ENCODE measurements at regions of chr2 and their contacts with region 1.

Region 1: GRCh38 chr2:99489761-99490622 is at the start of gene REV1:
- DNase-seq: peak; percentile 92 to 96 (median 95)
- H3K4me3 ChIP-seq: peak within 1 kb of the TSS; percentile 93
- H3K27ac ChIP-seq: peak within 1 kb of the TSS; percentile 98 to 99
- H3K4me1 ChIP-seq: no peaks in the 10 kb centered on the region
- H3K27me3 ChIP-seq: no peaks in the 10 kb centered on the region
- CTCF ChIP-seq: peak; percentile 69 to 98 (median 96)
- EP300 ChIP-seq: no peak
- POLR2A ChIP-seq: peak; percentile 55
- total RNA-seq, gene REV1: 43.2 to 63.3 (median 53.1) TPM

Region 2: DNA sequence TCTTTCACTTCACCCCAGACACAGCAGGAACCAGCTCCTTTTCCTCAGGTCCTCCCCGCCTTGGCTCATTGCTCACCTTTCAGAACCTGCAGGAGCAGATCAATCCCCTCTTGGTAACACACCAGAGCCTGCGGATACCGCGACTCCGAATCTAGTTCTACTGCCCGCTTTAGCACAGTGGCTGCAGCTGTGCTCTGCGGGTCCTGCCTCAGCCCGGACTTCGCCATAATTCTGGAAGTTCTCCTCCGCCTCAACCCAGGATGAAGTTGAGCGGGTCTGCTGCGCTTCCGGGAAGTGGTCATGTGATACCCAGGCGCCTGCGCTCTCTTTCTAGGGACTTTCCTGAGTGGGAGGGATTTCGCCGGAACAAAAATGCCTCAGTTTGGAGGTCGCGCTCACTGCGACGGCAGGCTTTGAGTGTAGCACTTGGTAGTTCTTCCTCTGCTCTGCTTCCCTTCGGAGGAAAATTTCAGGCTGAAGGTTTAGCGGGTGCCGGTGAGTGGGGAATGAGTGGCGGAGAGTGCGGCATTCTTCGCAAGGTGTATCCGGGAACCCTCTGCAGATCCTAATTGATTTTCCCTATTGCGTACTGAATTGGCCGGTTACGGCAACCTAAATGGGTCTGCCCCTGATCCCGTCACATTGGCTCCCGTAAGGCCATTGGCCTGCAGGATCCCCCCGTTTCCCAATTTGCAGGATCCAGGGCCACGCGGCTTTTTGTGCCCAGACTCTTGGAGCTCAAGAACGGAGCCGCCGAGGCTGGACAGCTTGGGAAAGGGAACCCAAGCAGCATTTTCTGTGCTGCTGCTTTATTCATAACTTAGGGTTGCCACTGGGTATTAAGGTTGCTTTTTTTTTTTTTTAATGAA is 309.0 kb before region 1 on chr2 and contains the starts of genes MITD1 and MRPL30:
- intact Hi-C with region 1: loop called in 1 of 4 experiments (anchors 10 kb)
- DNase-seq: peak; percentile 87 to 92 (median 91)
- H3K4me3 ChIP-seq: peak within 1 kb of the TSS; percentile 78
- H3K27ac ChIP-seq: no peak within 1 kb of the TSS
- H3K4me1 ChIP-seq: peaks cover 10% of the 10 kb centered on the region
- H3K27me3 ChIP-seq: no peaks in the 10 kb centered on the region
- CTCF ChIP-seq: no peak
- EP300 ChIP-seq: no peak
- POLR2A ChIP-seq: peak; percentile 24
- total RNA-seq, gene MITD1: 16.0 to 26.1 (median 20.1) TPM
- total RNA-seq, gene MRPL30: 18.7 to 29.0 (median 21.8) TPM

Region 3: DNA sequence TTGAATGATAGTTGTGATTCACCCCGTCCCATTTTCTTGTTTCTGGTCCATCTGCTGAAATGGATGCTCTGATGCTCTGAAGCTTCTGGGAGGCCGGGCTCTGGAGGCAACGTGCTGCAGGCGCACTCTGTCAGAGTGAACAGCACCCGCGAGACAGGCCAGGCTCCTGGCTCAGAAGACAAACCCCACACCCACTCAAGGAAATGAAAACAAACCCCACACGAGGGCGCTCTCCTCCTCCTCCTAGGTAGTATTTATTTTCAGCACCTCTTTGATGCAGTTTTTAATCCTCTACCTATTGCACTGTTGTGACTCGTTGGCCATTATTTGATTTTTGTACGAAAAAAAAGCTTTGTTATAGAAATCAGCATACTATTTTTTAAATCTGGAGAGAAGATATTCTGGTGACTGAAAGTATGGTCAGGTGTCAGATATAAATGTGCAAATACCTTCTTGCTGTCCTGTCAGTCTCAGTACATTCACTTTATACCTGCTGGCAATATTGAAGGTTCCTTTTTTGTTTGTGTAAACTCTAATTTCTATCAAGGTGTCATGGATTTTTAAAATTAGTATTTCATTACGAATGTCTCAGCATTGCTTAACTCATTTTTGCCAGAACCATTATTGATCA is 937.8 kb after region 1 on chr2:
- intact Hi-C with region 1: no loop called
- DNase-seq: peak; percentile 44 to 71 (median 56)
- H3K4me3 ChIP-seq: no peak overlapping the region
- H3K27ac ChIP-seq: no peak overlapping the region
- H3K4me1 ChIP-seq: no peaks in the 10 kb centered on the region
- H3K27me3 ChIP-seq: no peaks in the 10 kb centered on the region
- CTCF ChIP-seq: no peak
- EP300 ChIP-seq: no peak
- POLR2A ChIP-seq: no peak

Measured in ovary (tissue), 10 donors.